IMR-90 (cell line): ENCODE measurements at regions of chr13 and their contacts with region 1.

Region 1: GRCh38 chr13:23899555-23899954 is 2.3 kb upstream of the C1QTNF9B start:
- DNase-seq: peak; percentile 74
- ATAC-seq: peak; percentile 51
- H3K4me3 ChIP-seq: no peak overlapping the region
- H3K27ac ChIP-seq: peak overlapping the region; percentile 78; the same call in 1 of the 2 replicates
- H3K4me1 ChIP-seq: peaks cover 14% of the 10 kb centered on the region
- H3K27me3 ChIP-seq: no peaks in the 10 kb centered on the region
- CTCF ChIP-seq: peak; percentile 74
- POLR2A ChIP-seq: no peak
- RAD21 ChIP-seq: peak; percentile 68

Region 2: DNA sequence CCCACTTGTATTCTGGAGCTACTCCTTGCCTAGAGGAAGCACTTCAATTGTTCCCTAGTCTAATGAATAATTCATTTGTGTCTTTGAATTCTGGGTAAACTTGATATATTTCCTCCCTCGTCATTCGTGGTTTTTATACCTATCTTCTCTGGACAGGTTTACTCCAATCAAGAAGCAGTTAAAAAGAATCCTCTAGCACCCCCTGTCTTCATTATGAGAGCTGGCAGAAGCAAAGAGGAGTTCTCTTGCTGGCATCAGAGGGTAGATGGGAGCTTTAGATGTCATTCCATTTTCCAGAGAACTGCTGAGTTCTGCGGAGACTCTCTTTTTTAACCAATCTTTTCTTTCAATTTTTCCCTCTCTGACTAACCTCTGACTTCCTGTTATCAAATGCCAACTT is 1601.0 kb before region 1 on chr13:
- CTCF ChIA-PET with region 1: no interaction called
- POLR2A ChIA-PET with region 1: no interaction called
- dilution Hi-C with region 1: no loop called
- in situ Hi-C with region 1: no loop called
- intact Hi-C with region 1: no loop called
- DNase-seq: no peak
- ATAC-seq: no peak
- H3K4me3 ChIP-seq: no peak overlapping the region
- H3K27ac ChIP-seq: no peak overlapping the region
- H3K4me1 ChIP-seq: no peaks in the 10 kb centered on the region
- H3K27me3 ChIP-seq: no peaks in the 10 kb centered on the region
- CTCF ChIP-seq: no peak
- POLR2A ChIP-seq: no peak
- RAD21 ChIP-seq: no peak

Region 3: GRCh38 chr13:23531446-23531845 is 368.1 kb before region 1 on chr13:
- CTCF ChIA-PET with region 1: no interaction called
- POLR2A ChIA-PET with region 1: interaction called, 11 read pairs
- dilution Hi-C with region 1: no loop called
- in situ Hi-C with region 1: no loop called
- intact Hi-C with region 1: no loop called
- DNase-seq: no peak
- ATAC-seq: no peak
- H3K4me3 ChIP-seq: no peak overlapping the region
- H3K27ac ChIP-seq: no peak overlapping the region
- H3K4me1 ChIP-seq: no peaks in the 10 kb centered on the region
- H3K27me3 ChIP-seq: no peaks in the 10 kb centered on the region
- CTCF ChIP-seq: no peak
- POLR2A ChIP-seq: no peak
- RAD21 ChIP-seq: no peak

Region 4: DNA sequence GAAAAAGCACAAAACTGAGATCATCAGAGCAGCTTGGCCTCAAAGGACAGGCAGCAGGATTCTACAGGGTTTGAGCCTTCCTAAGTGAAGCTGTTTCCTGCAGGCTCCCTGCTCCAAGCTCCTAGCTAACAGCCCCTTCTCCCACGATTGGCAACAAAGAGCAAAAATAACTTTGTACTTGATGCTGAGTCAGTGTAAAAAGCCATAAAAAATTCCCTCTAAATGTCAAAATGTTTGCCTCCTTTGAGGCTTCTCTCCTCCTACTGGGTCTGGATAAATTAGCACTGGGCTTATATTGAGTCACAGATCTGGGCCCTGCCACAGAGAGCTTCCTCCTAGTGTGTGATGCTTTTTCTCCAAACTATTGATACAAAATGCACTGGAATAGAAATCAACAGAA is 176.1 kb before region 1 on chr13:
- CTCF ChIA-PET with region 1: no interaction called
- POLR2A ChIA-PET with region 1: no interaction called
- dilution Hi-C with region 1: no loop called
- in situ Hi-C with region 1: no loop called
- intact Hi-C with region 1: no loop called
- DNase-seq: peak; percentile 78
- ATAC-seq: peak; percentile 83
- H3K4me3 ChIP-seq: no peak overlapping the region
- H3K27ac ChIP-seq: peak overlapping the region; percentile 90
- H3K4me1 ChIP-seq: peaks cover 24% of the 10 kb centered on the region
- H3K27me3 ChIP-seq: no peaks in the 10 kb centered on the region
- CTCF ChIP-seq: peak; percentile 13; the same call in 1 of the 2 replicates
- POLR2A ChIP-seq: no peak
- RAD21 ChIP-seq: peak; percentile 22; the same call in 1 of the 2 replicates

Region 5: DNA sequence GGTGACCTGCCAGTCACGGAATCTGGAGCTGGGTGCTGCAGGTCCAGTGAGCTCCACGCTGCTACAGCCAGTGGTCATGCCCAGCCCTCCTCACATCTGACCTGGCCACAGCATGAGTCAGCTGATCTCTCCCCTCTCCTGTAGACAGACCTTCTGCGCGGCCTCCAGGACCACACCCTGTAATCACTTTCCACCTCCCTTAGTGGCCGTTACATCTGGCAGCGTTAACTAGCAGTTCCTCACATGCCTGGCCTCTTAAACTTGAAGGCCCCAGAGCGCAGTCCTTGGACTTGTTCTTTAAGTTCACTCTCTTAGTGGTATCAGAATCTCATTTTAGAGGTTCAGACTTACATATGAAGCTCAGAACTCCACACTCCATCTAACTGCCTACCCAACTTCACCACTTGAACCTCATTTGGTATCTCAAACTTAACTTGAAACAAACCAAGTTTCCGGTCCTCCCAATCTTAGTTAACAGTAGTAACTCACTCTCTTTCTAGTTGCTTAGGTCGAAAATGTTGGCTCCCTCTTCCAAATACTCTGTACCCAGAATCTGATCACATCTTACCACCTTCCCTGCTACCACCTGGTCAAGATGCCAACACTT is 33.0 kb before region 1 on chr13:
- CTCF ChIA-PET with region 1: interaction called, 3 read pairs
- POLR2A ChIA-PET with region 1: interaction called, 22 read pairs
- dilution Hi-C with region 1: no loop called
- in situ Hi-C with region 1: no loop called
- intact Hi-C with region 1: no loop called
- DNase-seq: peak; percentile 15
- ATAC-seq: no peak
- H3K4me3 ChIP-seq: no peak overlapping the region
- H3K27ac ChIP-seq: peak overlapping the region; percentile 89
- H3K4me1 ChIP-seq: peaks cover 21% of the 10 kb centered on the region
- H3K27me3 ChIP-seq: no peaks in the 10 kb centered on the region
- CTCF ChIP-seq: no peak
- POLR2A ChIP-seq: no peak
- RAD21 ChIP-seq: no peak